ENCODE measurements at regions of chr1 and their contacts with region 1.

Region 1: GRCh38 chr1:41416552-41417334 is 55.5 kb downstream of the FOXO6 start:
- DNase-seq: peak; percentile 5
- ATAC-seq: peak; percentile 93
- H3K4me3 ChIP-seq: no peak overlapping the region
- H3K27ac ChIP-seq: no peak overlapping the region
- H3K4me1 ChIP-seq: no peaks in the 10 kb centered on the region
- H3K27me3 ChIP-seq: no peaks in the 10 kb centered on the region; a peak in 1 of 4 replicates
- CTCF ChIP-seq: peak; percentile 92 to 95 (median 94); a peak in 5 of 6 replicates
- EP300 ChIP-seq: no peak
- POLR2A ChIP-seq: no peak
- RAD21 ChIP-seq: peak; percentile 90

Region 2: DNA sequence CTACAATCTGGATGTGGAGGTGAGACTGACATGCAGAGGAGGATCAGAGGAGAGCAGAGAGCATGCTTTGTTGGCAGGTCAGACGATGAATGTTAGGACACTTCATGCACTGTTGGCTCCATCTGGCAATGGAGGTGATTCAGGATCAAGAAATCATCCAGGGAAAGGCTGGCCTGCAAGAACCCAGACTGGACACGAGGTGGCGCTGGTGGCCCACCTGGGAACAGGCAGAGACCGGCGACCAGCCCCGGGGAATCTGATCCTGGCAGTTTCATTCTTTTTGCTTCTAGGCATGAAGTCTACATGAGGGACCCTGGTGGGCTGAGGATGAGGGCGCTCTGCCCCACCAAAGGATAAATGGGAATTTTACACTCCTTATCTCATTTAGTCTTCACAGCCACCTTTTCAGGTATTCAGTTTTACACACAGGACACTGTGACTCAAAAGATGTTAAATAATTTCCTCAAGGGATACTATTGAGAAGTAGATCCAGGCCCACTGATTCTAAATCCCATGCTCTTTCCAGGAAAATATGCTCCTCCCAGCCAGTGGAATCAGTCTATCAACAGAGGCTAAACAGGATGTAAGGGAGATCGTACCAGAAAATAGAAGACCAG is 148.5 kb before region 1 on chr1:
- CTCF ChIA-PET with region 1: interaction called, 14 read pairs
- POLR2A ChIA-PET with region 1: no interaction called
- RAD21 ChIA-PET with region 1: interaction called, 3 read pairs
- SMC1A ChIA-PET with region 1: interaction called, 5 read pairs
- in situ Hi-C with region 1: no loop called
- intact Hi-C with region 1: loop called (anchors 1 kb)
- DNase-seq: no peak
- ATAC-seq: peak; percentile 80
- H3K4me3 ChIP-seq: no peak overlapping the region
- H3K27ac ChIP-seq: no peak overlapping the region
- H3K4me1 ChIP-seq: no peaks in the 10 kb centered on the region
- H3K27me3 ChIP-seq: no peaks in the 10 kb centered on the region
- CTCF ChIP-seq: peak; percentile 94 to 96 (median 96); a peak in 5 of 6 replicates
- EP300 ChIP-seq: no peak
- POLR2A ChIP-seq: no peak
- RAD21 ChIP-seq: peak; percentile 91

Region 3: DNA sequence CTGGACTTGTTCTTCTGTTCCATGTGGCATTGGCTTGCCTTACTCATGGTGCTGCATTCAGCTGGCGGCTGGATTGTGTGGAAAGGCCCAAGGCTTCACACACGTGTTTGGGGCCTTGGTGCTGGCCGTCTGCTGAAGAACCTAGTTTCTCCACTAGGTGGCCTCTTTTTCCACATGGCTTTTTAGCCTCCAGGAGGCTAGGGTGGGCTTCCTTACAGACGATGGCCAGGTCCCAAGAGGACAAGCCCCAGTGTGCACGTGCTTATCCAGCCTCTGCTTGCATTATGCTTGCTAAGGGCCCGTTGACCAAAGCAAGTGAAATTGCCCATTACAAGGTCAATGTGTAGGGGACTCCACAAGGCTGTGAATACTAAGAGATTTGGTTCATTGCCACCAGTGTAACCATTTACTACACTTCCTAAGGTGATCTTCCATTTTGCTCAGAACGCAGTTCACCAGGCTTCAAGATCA is 103.0 kb before region 1 on chr1:
- CTCF ChIA-PET with region 1: interaction called, 261 read pairs
- POLR2A ChIA-PET with region 1: no interaction called
- RAD21 ChIA-PET with region 1: interaction called, 7 read pairs
- SMC1A ChIA-PET with region 1: interaction called, 9 read pairs
- in situ Hi-C with region 1: no loop called
- intact Hi-C with region 1: no loop called
- DNase-seq: no peak
- ATAC-seq: peak; percentile 78
- H3K4me3 ChIP-seq: no peak overlapping the region
- H3K27ac ChIP-seq: no peak overlapping the region
- H3K4me1 ChIP-seq: no peaks in the 10 kb centered on the region
- H3K27me3 ChIP-seq: no peaks in the 10 kb centered on the region; a peak in 2 of 4 replicates
- CTCF ChIP-seq: peak; percentile 46 to 71 (median 62)
- EP300 ChIP-seq: no peak
- POLR2A ChIP-seq: no peak
- RAD21 ChIP-seq: peak; percentile 36; the same call in 1 of the 2 replicates

Region 4: DNA sequence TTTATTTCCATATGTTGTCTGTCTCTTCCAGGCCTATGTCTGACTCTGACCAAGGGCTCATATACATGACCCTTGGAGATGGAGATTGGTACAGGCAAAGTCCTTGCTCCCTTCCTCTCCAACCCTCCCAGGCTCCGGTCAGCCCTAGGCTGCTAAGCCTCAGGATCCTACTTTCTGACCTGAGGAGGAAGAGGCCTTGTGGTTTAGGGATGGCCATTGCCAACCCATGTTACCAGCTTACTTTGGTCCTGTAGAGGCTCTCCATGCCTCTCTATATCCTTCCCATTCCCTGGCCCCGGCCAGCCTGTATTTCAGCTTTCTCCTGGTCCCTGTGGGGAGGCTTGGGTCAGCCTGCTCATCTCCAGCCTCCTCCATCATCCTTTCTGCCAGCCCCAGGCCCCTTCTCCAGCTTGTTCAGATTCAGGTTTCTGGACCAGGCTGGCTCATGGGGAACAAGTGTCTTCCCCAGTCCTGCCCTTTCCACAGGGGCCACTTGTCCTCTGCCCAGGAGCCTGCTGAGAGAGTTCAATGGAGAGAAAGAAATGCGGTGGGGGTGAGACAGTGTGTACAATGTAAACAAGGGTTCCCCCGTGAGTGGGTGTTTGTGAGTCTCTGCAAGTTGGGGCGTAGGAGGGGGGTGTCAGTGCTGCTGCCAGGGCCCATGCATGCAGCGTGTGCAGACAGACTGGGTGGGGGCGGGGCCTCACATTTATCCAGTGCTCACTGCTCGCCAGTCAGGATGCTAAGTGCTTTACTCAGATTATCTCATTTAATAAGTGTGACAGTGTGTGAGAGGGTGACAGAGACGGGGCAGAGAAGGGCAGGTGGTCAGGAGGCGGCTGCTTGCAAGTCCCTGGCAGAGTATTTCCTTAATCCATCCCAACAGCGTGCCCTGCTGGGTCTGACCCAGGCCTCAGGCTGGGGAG is 86.8 kb before region 1 on chr1:
- CTCF ChIA-PET with region 1: interaction called, 261 read pairs
- POLR2A ChIA-PET with region 1: no interaction called
- RAD21 ChIA-PET with region 1: interaction called, 132 read pairs
- SMC1A ChIA-PET with region 1: interaction called, 114 read pairs
- in situ Hi-C with region 1: loop called (anchors 5 kb)
- intact Hi-C with region 1: no loop called
- DNase-seq: no peak
- ATAC-seq: no peak
- H3K4me3 ChIP-seq: no peak overlapping the region
- H3K27ac ChIP-seq: no peak overlapping the region
- H3K4me1 ChIP-seq: no peaks in the 10 kb centered on the region
- H3K27me3 ChIP-seq: no peaks in the 10 kb centered on the region
- CTCF ChIP-seq: no peak
- EP300 ChIP-seq: no peak
- POLR2A ChIP-seq: no peak
- RAD21 ChIP-seq: no peak

Region 5: GRCh38 chr1:41360993-41361753 is 55.6 kb before region 1 on chr1 and contains the start of gene FOXO6:
- CTCF ChIA-PET with region 1: interaction called, 14 read pairs
- POLR2A ChIA-PET with region 1: interaction called, 3 read pairs
- RAD21 ChIA-PET with region 1: interaction called, 15 read pairs
- SMC1A ChIA-PET with region 1: interaction called, 4 read pairs
- in situ Hi-C with region 1: no loop called
- intact Hi-C with region 1: no loop called
- DNase-seq: peak; percentile 49
- ATAC-seq: peak; percentile 93
- H3K4me3 ChIP-seq: peak within 1 kb of the TSS; percentile 58
- H3K27ac ChIP-seq: no peak within 1 kb of the TSS
- H3K4me1 ChIP-seq: peaks cover 12% of the 10 kb centered on the region
- H3K27me3 ChIP-seq: peaks cover 10 to 16% of the 10 kb centered on the region in 2 experiments; a peak in 3 of 4 replicates
- CTCF ChIP-seq: peak in 2 of 3 experiments; percentile 16 to 50; a peak in 1 of 6 replicates
- EP300 ChIP-seq: no peak
- POLR2A ChIP-seq: no peak
- RAD21 ChIP-seq: no peak
- polyA plus RNA-seq, gene FOXO6: not detected

Region 6: GRCh38 chr1:41432481-41433280 is 15.9 kb after region 1 on chr1:
- CTCF ChIA-PET with region 1: interaction called, 16 read pairs
- POLR2A ChIA-PET with region 1: no interaction called
- RAD21 ChIA-PET with region 1: interaction called, 13 read pairs
- SMC1A ChIA-PET with region 1: interaction called, 10 read pairs
- in situ Hi-C with region 1: no loop called
- intact Hi-C with region 1: no loop called
- DNase-seq: no peak
- ATAC-seq: peak; percentile 99
- H3K4me3 ChIP-seq: no peak overlapping the region
- H3K27ac ChIP-seq: no peak overlapping the region
- H3K4me1 ChIP-seq: no peaks in the 10 kb centered on the region
- H3K27me3 ChIP-seq: peaks cover 3 to 7% of the 10 kb centered on the region in 2 experiments; a peak in 3 of 4 replicates
- CTCF ChIP-seq: peak; percentile 84 to 91 (median 85)
- EP300 ChIP-seq: no peak
- POLR2A ChIP-seq: no peak
- RAD21 ChIP-seq: peak; percentile 63